Activated CD8-positive, alpha-beta T cell treated with anti-CD3 and anti-CD28 coated beads for 36 hours (primary cell): ENCODE measurements at regions of chr11 and their contacts with region 1.

Region 1: GRCh38 chr11:57644748-57645688 is 4.7 kb downstream of the YPEL4 start:
- DNase-seq: peak; percentile 93
- ATAC-seq: peak; percentile 71
- H3K4me3 Mint-ChIP-seq: no peak overlapping the region
- H3K27ac Mint-ChIP-seq: no peak overlapping the region
- H3K4me1 Mint-ChIP-seq: peaks cover 36% of the 10 kb centered on the region
- H3K27me3 Mint-ChIP-seq: peaks cover 48% of the 10 kb centered on the region
- CTCF ChIP-seq: peak; percentile 78

Region 2: DNA sequence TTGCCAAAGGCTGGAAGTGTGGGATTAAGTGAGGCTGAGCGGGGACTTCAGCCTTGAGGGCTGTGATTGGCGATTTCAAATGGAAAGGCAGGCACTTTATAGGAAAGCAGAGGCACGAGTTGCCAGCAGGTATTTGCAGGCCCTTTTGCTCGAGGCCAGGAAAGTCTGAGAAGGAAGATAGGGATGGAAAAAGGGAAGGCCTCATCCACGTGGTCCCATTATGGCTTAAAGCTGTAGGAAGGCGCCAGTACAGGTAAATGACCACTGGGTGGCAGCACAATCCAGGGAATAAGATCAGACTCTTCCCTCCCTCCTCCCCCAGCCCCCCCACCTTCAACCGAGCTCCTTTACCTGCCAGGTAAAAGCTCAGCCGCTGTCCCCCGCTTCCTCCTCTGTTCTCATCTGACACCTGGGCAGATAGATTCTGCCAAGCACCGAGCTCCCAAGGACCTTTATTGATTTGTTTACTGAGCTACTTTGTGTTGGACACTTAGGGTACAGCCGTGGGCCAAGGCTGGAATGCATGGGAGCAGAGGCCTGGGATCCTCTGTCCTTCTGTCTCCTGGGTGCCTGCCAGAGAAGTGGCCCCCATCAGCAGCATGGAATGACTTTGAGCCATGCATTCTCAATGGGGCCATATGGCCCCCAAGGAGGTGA is 299.3 kb before region 1 on chr11:
- CTCF ChIA-PET with region 1: interaction called, 14 read pairs
- POLR2A ChIA-PET with region 1: no interaction called
- intact Hi-C with region 1: no loop called
- DNase-seq: peak; percentile 85
- ATAC-seq: peak; percentile 87
- H3K4me3 Mint-ChIP-seq: no peak overlapping the region
- H3K27ac Mint-ChIP-seq: no peak overlapping the region
- H3K4me1 Mint-ChIP-seq: peaks cover 6% of the 10 kb centered on the region
- H3K27me3 Mint-ChIP-seq: peaks cover 3% of the 10 kb centered on the region
- CTCF ChIP-seq: peak; percentile 93

Region 3: GRCh38 chr11:57523419-57523818 is 121.6 kb before region 1 on chr11:
- CTCF ChIA-PET with region 1: interaction called, 28 read pairs
- POLR2A ChIA-PET with region 1: no interaction called
- intact Hi-C with region 1: no loop called
- DNase-seq: no peak
- ATAC-seq: no peak
- H3K4me3 Mint-ChIP-seq: no peak overlapping the region
- H3K27ac Mint-ChIP-seq: no peak overlapping the region
- H3K4me1 Mint-ChIP-seq: peaks cover 12% of the 10 kb centered on the region
- H3K27me3 Mint-ChIP-seq: no peaks in the 10 kb centered on the region
- CTCF ChIP-seq: no peak

Region 4: DNA sequence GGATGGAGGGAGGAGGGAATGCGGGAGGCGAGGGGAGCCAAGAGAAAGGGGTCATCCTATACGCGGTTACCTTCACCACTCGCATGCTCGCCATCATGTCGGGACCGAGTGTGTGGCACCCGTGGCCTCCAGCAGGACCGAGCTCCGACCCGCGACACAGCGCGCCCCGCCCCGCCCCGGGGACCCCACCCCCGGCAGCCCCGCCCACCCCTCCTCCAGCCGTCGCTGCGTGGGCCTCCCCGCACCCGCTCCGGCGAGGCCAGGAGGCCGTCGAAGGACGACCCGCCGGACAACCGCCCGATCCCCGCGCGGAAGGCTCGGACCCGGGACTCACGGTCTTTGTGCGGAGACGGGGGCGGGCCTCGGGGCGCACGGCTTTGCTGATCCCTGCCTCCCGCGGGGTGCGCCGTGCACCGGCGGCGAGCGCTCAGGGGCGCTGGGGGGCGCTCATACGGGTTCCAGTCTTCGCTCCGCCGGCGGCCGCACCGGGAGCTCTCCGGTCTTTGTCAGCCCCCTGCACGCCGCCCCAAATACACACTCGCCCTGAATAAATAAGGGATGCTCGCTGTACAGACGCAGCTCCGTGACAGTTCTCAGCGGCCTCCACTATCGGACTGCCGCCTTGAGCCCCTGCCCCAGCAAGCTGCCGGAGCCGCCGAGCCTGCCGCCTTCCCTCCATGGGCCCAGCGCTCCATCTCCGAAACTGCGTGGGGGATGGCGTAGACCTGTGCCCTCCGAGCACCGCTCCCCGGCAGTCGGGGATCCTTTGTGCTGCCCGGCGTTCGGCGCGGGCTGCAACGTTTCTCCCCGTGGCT is 77.3 kb before region 1 on chr11 and contains the start of gene UBE2L6:
- CTCF ChIA-PET with region 1: interaction called, 346 read pairs
- POLR2A ChIA-PET with region 1: interaction called, 33 read pairs
- intact Hi-C with region 1: loop called (anchors 1 kb)
- DNase-seq: peak; percentile 74
- ATAC-seq: peak; percentile 82
- H3K4me3 Mint-ChIP-seq: peak within 1 kb of the TSS; percentile 89
- H3K27ac Mint-ChIP-seq: peak within 1 kb of the TSS; percentile 98
- H3K4me1 Mint-ChIP-seq: peaks cover 35% of the 10 kb centered on the region
- H3K27me3 Mint-ChIP-seq: no peaks in the 10 kb centered on the region
- CTCF ChIP-seq: no peak
- total RNA-seq, gene UBE2L6: 148 to 159 TPM

Region 5: GRCh38 chr11:57614234-57614772 is 30.7 kb before region 1 on chr11:
- CTCF ChIA-PET with region 1: interaction called, 30 read pairs
- POLR2A ChIA-PET with region 1: no interaction called
- intact Hi-C with region 1: no loop called
- DNase-seq: no peak
- ATAC-seq: no peak
- H3K4me3 Mint-ChIP-seq: no peak overlapping the region
- H3K27ac Mint-ChIP-seq: no peak overlapping the region
- H3K4me1 Mint-ChIP-seq: no peaks in the 10 kb centered on the region
- H3K27me3 Mint-ChIP-seq: no peaks in the 10 kb centered on the region
- CTCF ChIP-seq: no peak

Region 6: DNA sequence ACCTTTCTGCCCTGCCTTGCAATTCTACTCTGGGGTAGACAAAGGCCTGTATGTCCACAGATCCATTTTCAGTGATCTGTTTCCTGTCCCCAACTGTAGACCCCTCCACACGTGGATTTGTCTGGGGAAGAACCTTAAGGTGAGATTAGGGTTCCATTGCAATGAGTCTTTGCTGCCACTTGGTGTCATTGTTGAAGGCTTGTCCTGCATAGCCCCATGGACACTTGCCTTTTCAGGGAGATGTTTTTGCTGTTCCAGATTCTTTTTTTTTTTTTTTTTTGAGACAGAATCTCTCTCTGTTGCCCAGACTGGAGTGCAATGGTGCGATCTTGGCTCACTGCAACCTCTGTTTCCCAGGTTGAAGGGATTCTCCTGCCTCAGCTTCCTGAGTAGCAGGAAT is 25.7 kb before region 1 on chr11:
- CTCF ChIA-PET with region 1: interaction called, 30 read pairs
- POLR2A ChIA-PET with region 1: no interaction called
- intact Hi-C with region 1: no loop called
- DNase-seq: no peak
- ATAC-seq: no peak
- H3K4me3 Mint-ChIP-seq: no peak overlapping the region
- H3K27ac Mint-ChIP-seq: no peak overlapping the region
- H3K4me1 Mint-ChIP-seq: no peaks in the 10 kb centered on the region
- H3K27me3 Mint-ChIP-seq: no peaks in the 10 kb centered on the region
- CTCF ChIP-seq: no peak

Region 7: GRCh38 chr11:57630193-57630592 is 14.8 kb before region 1 on chr11:
- CTCF ChIA-PET with region 1: interaction called, 30 read pairs
- POLR2A ChIA-PET with region 1: no interaction called
- intact Hi-C with region 1: no loop called
- DNase-seq: no peak
- ATAC-seq: no peak
- H3K4me3 Mint-ChIP-seq: no peak overlapping the region
- H3K27ac Mint-ChIP-seq: no peak overlapping the region
- H3K4me1 Mint-ChIP-seq: no peaks in the 10 kb centered on the region
- H3K27me3 Mint-ChIP-seq: peaks cover 17% of the 10 kb centered on the region
- CTCF ChIP-seq: no peak